HEK293 (cell line): ENCODE measurements at regions of chr10 and their contacts with region 1.

Region 1: DNA sequence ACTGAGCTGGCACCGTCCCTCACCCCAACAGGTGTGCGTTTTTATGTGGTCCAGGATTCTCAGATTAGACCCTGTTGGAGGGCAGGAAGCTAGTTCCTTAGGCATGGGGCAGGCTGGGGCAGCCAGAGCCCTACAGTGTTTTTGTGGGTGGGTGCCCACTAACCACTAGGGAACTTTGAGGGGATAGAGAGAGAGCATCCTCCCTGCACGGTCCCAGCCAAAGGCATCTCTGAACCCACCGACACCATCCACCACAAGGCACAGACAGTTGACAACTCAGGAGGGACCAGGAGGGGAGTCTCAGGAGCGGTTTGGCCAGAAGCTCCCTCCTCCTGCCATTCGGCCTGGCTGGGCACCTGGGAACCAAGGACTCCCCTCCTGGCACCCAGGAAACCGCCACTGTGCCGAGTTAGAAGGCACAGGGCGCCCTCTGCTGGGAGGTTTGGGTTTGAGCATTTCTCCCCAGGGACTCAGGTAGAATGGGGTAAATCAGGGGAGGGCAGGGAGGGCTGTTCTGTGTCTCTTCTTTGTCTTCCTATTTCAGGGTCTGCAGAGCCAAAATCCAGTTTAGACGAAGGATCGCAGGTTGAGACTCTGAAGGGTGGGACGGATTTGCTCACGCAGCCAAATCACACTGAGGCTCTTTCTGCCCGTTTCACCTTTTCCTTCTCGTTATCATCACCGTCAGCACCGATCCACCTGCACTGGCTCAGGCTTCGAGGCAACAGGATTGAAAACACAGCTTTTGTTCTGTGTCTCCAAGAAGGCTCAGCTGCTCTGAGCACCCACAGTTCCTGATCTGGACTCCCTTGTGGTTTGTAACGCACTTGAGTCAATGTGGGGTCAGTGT is 84.8 kb upstream of the COL13A1 start:
- H3K4me3 ChIP-seq: no peak overlapping the region
- H3K27ac ChIP-seq: no peak overlapping the region
- H3K4me1 ChIP-seq: no peaks in the 10 kb centered on the region
- CTCF ChIP-seq: peak; percentile 70

Region 2: DNA sequence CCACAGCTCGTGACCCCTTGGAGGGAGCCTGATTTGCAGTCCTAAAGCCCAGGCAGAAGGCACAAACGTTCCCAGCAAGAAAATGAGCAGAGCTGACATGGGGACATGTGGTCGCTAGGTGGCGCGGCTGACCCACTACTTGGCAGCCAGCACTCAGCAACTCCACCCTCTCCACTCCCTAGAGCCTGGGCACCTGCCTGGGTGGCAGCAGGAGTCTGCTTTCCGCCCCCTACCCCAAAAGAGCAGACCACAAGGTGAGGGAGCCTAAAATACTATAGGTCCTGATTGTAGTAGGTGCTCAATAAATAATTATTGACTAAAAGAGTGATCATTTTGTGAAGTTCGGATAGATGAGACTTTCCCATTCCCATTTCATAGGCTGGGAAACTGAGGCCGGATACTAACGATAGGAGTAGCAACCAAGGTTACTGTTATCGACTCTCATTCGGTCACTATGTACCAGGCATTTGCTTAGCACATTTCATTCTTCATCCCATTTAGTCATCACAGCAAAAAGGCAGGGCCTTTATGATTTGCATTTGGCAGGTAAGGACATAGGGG is 201.2 kb before region 1 on chr10:
- CTCF ChIA-PET with region 1: interaction called, 17 read pairs
- POLR2A ChIA-PET with region 1: no interaction called
- H3K4me3 ChIP-seq: no peak overlapping the region
- H3K27ac ChIP-seq: no peak overlapping the region
- H3K4me1 ChIP-seq: no peaks in the 10 kb centered on the region
- CTCF ChIP-seq: peak; percentile 84

Region 3: GRCh38 chr10:69577268-69578232 is 139.4 kb before region 1 on chr10:
- CTCF ChIA-PET with region 1: no interaction called
- POLR2A ChIA-PET with region 1: no interaction called
- H3K4me3 ChIP-seq: no peak overlapping the region
- H3K27ac ChIP-seq: no peak overlapping the region
- H3K4me1 ChIP-seq: peaks cover 6% of the 10 kb centered on the region; the same call in 1 of the 2 replicates
- CTCF ChIP-seq: no peak

Region 4: GRCh38 chr10:69659241-69660038 is 57.5 kb before region 1 on chr10:
- CTCF ChIA-PET with region 1: interaction called, 15 read pairs
- POLR2A ChIA-PET with region 1: no interaction called
- H3K4me3 ChIP-seq: no peak overlapping the region
- H3K27ac ChIP-seq: no peak overlapping the region
- H3K4me1 ChIP-seq: no peaks in the 10 kb centered on the region
- CTCF ChIP-seq: no peak

Region 5: GRCh38 chr10:69703766-69704638 is 12.9 kb before region 1 on chr10:
- CTCF ChIA-PET with region 1: interaction called, 23 read pairs
- POLR2A ChIA-PET with region 1: no interaction called
- H3K4me3 ChIP-seq: no peak overlapping the region
- H3K27ac ChIP-seq: no peak overlapping the region
- H3K4me1 ChIP-seq: no peaks in the 10 kb centered on the region
- CTCF ChIP-seq: no peak

Region 6: GRCh38 chr10:69819716-69820506 is 103.0 kb after region 1 on chr10:
- CTCF ChIA-PET with region 1: no interaction called
- POLR2A ChIA-PET with region 1: no interaction called
- H3K4me3 ChIP-seq: no peak overlapping the region
- H3K27ac ChIP-seq: no peak overlapping the region
- H3K4me1 ChIP-seq: no peaks in the 10 kb centered on the region
- CTCF ChIP-seq: no peak